CD8-positive, alpha-beta memory T cell (primary cell): ENCODE measurements at regions of chr6 and their contacts with region 1.

Region 1: DNA sequence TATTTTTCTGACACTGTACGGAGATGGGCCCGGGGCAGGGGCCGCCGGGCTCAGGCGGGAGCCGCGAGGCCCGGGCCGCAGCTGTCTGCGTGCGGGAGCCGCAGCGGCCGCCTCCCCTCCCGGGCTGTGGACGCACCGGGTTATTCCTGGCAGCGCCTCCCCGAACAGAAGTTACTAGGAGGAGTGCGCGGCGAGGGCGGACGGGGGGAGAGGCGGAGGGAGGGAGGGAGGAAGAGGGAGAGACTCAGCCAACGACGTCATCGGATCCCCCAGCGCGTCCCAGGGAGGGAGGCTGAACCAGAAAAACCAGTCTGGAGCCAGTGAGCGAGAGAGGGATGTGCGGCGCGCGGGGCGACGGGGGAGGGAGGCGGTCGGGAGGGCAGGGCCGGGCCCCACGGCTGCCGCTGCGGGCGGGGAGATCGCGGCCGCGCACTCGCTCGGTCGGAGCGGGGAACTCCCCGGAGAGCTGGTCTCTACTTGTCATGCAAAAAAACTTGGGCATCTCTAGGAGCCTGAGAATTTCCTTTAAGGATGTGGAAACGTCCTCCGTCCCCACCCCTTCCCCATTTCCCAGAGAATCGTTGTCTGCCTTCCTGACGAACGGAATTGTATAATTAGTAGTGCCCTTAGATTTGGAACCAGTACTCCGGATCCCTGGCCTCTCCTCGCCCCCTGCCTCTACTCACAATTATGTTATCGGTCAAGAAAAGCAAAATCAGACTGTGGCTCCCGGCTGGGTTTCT is 1.4 kb upstream of the HIVEP2 start:
- DNase-seq: peak; percentile 91 to 95 (median 93)
- H3K4me3 ChIP-seq: peak overlapping the region; percentile 89
- H3K4me3 Mint-ChIP-seq: peak overlapping the region; percentile 94 to 100 (median 96)
- H3K27ac ChIP-seq: peak overlapping the region; percentile 98
- H3K27ac Mint-ChIP-seq: peak overlapping the region; percentile 98 to 100 (median 99)
- H3K4me1 ChIP-seq: peaks cover 34% of the 10 kb centered on the region
- H3K4me1 Mint-ChIP-seq: peaks cover 36 to 39% (median 38%) of the 10 kb centered on the region in 3 donors
- H3K27me3 ChIP-seq: no peaks in the 10 kb centered on the region
- H3K27me3 Mint-ChIP-seq: peaks cover 0 to 4% of the 10 kb centered on the region in 2 donors

Region 2: DNA sequence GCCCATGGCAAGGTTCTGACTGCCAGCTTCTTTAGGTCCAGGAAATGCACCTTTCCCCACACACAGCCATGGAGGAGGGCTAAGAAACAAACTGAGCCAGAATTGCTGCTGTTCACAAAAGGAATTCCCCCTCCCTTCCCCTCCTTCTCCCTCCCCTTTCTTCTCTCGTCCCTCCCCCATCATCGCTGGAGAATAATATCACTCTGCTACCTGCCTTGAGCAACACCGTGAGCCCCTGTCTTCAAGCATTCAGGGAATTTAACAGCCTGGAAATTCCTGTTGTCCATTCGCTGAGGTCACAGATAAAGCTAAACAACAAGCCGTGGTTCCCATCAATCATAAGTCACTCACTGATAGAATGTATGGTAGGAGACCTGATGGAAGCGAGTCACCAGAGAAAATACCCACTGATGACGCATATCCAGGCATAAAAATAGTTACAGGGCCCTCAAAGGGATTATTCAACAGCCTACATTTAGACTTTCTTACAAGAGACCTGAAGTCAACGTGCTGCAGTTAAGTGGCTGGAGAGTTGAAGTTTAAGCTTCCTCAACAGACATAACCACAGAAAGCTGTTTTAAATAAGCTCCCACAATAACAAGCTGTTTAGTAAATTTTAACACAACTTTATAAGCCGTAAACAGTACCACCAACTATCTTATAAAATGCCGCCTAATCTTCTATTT is 61.0 kb before region 1 on chr6:
- CTCF ChIA-PET with region 1: interaction called, 11 read pairs
- POLR2A ChIA-PET with region 1: interaction called, 17 read pairs
- DNase-seq: peak; percentile 14 to 84 (median 62)
- H3K4me3 ChIP-seq: peak overlapping the region; percentile 59
- H3K4me3 Mint-ChIP-seq: peak overlapping the region; percentile 67 to 96 (median 87)
- H3K27ac ChIP-seq: peak overlapping the region; percentile 55
- H3K27ac Mint-ChIP-seq: peak overlapping the region; percentile 87 to 100 (median 99)
- H3K4me1 ChIP-seq: peaks cover 78% of the 10 kb centered on the region
- H3K4me1 Mint-ChIP-seq: peaks cover 86 to 99% (median 97%) of the 10 kb centered on the region in 3 donors
- H3K27me3 ChIP-seq: no peaks in the 10 kb centered on the region
- H3K27me3 Mint-ChIP-seq: no peaks in the 10 kb centered on the region